ENCODE measurements at regions of chr11 and their contacts with region 1.

Region 1: GRCh38 chr11:68513930-68514487 is 53.5 kb downstream of the PPP6R3 start:
- DNase-seq: no peak
- ATAC-seq: no peak
- H3K4me3 ChIP-seq: no peak overlapping the region
- H3K4me3 Mint-ChIP-seq: no peak overlapping the region
- H3K27ac ChIP-seq: no peak overlapping the region
- H3K27ac Mint-ChIP-seq: no peak overlapping the region
- H3K4me1 ChIP-seq: peaks cover 11% of the 10 kb centered on the region
- H3K4me1 Mint-ChIP-seq: peaks cover 63% of the 10 kb centered on the region
- H3K27me3 ChIP-seq: no peaks in the 10 kb centered on the region
- H3K27me3 Mint-ChIP-seq: no peaks in the 10 kb centered on the region
- CTCF ChIP-seq: no peak

Region 2: GRCh38 chr11:68550485-68550817 is 36.4 kb after region 1 on chr11:
- CTCF ChIA-PET with region 1: no interaction called
- POLR2A ChIA-PET with region 1: no interaction called
- intact Hi-C with region 1: no loop called
- DNase-seq: peak in 1 of 9 experiments; percentile 43
- ATAC-seq: no peak
- H3K4me3 ChIP-seq: peak overlapping the region in 1 of 2 experiments; percentile 3
- H3K4me3 Mint-ChIP-seq: peak overlapping the region; percentile 56
- H3K27ac ChIP-seq: peak overlapping the region in 1 of 2 experiments; percentile 33
- H3K27ac Mint-ChIP-seq: peak overlapping the region; percentile 91
- H3K4me1 ChIP-seq: peaks cover 32% of the 10 kb centered on the region
- H3K4me1 Mint-ChIP-seq: peaks cover 73% of the 10 kb centered on the region
- H3K27me3 ChIP-seq: no peaks in the 10 kb centered on the region
- H3K27me3 Mint-ChIP-seq: no peaks in the 10 kb centered on the region
- CTCF ChIP-seq: no peak

Region 3: GRCh38 chr11:68643585-68643984 is 129.6 kb after region 1 on chr11:
- CTCF ChIA-PET with region 1: no interaction called
- POLR2A ChIA-PET with region 1: no interaction called
- intact Hi-C with region 1: loop called in 1 of 2 experiments (anchors 2 kb)
- DNase-seq: no peak
- ATAC-seq: no peak
- H3K4me3 ChIP-seq: no peak overlapping the region
- H3K4me3 Mint-ChIP-seq: no peak overlapping the region
- H3K27ac ChIP-seq: no peak overlapping the region
- H3K27ac Mint-ChIP-seq: no peak overlapping the region
- H3K4me1 ChIP-seq: no peaks in the 10 kb centered on the region
- H3K4me1 Mint-ChIP-seq: no peaks in the 10 kb centered on the region
- H3K27me3 ChIP-seq: no peaks in the 10 kb centered on the region
- H3K27me3 Mint-ChIP-seq: peaks cover 10% of the 10 kb centered on the region
- CTCF ChIP-seq: no peak